ENCODE measurements at regions of chr17 and their contacts with region 1.

Region 1: GRCh38 chr17:64129764-64130558 is at the start of gene ERN1:
- DNase-seq: peak; percentile 87 to 95 (median 88)
- H3K4me3 ChIP-seq: peak within 1 kb of the TSS; percentile 92
- H3K4me3 Mint-ChIP-seq: peak within 1 kb of the TSS; percentile 91 to 98 (median 97)
- H3K27ac ChIP-seq: peak within 1 kb of the TSS; percentile 82
- H3K27ac Mint-ChIP-seq: peak within 1 kb of the TSS; percentile 92 to 98 (median 98)
- H3K4me1 ChIP-seq: peaks cover 32% of the 10 kb centered on the region
- H3K4me1 Mint-ChIP-seq: peaks cover 48 to 63% (median 59%) of the 10 kb centered on the region in 3 donors
- H3K27me3 ChIP-seq: no peaks in the 10 kb centered on the region
- H3K27me3 Mint-ChIP-seq: no peaks in the 10 kb centered on the region
- total RNA-seq, gene ERN1: 24.7 to 25.5 TPM

Region 2: DNA sequence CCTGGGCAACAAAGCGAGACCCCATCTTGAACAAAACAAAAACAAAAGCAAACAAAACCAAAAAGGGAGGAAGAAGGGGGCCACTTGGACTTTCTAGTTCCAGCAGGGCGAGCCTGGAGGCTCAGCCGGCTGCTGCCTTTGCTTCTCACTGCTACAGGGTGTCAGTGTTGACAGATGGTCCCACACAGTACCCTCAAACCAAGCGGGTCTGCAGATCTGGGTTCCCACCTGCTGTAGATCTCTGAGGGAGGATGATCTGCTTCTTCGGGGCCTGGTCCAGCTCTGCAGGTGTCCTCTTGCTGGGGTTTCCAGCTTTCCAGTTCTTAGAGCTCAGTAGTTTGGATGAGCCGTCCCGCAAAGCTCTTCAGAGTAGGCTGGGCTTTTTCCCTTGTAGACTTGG is 225.6 kb before region 1 on chr17:
- CTCF ChIA-PET with region 1: interaction called, 14 read pairs
- POLR2A ChIA-PET with region 1: no interaction called
- DNase-seq: no peak
- H3K4me3 ChIP-seq: no peak overlapping the region
- H3K4me3 Mint-ChIP-seq: no peak overlapping the region
- H3K27ac ChIP-seq: no peak overlapping the region
- H3K27ac Mint-ChIP-seq: no peak overlapping the region
- H3K4me1 ChIP-seq: no peaks in the 10 kb centered on the region
- H3K4me1 Mint-ChIP-seq: peaks cover 2 to 7% (median 5%) of the 10 kb centered on the region in 3 donors
- H3K27me3 ChIP-seq: no peaks in the 10 kb centered on the region
- H3K27me3 Mint-ChIP-seq: peaks cover 3 to 9% of the 10 kb centered on the region in 2 donors

Region 3: GRCh38 chr17:63919311-63919723 is 210.6 kb before region 1 on chr17:
- CTCF ChIA-PET with region 1: interaction called, 83 read pairs
- POLR2A ChIA-PET with region 1: interaction called, 4 read pairs
- DNase-seq: peak; percentile 57 to 81 (median 71)
- H3K4me3 ChIP-seq: no peak overlapping the region
- H3K4me3 Mint-ChIP-seq: no peak overlapping the region
- H3K27ac ChIP-seq: no peak overlapping the region
- H3K27ac Mint-ChIP-seq: peak overlapping the region in 5 of 8 donors; percentile 17 to 78 (median 63)
- H3K4me1 ChIP-seq: peaks cover 8% of the 10 kb centered on the region
- H3K4me1 Mint-ChIP-seq: peaks cover 6 to 10% (median 10%) of the 10 kb centered on the region in 3 donors
- H3K27me3 ChIP-seq: no peaks in the 10 kb centered on the region
- H3K27me3 Mint-ChIP-seq: peaks cover 0 to 3% of the 10 kb centered on the region in 2 donors

Region 4: DNA sequence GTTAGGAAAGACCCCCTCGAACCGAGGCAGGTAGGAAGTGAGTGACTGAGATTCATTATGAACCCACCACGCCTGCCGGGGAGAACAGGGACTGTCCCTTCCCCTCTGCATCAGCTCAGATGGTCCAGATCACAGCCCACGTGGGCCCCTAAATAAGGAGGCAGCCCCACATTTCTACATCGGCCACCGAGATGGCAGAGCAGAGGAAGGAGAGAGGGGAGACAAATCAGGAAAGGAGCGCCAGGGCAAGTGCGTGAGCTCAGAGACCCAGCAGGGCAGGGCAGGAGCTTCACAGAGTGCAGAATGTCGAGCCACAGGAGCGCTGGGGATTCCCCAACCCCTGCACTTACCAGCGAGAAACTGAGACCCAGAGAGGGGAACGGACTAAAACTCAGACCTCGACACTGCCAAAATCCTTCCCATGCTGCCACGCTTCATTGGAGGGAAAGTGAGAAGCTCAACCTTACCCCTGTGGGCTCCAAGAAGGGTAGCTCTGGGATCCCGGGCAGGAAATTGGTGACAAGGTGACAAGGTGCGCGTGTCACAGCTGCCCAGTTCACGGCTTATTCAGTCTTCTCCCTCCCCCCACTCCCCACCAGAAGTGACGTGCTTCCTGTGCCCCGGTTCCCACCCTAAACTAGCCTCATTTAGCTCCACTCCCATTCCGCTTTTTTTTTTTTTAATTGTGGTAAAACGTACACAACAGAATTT is 109.8 kb before region 1 on chr17 and contains the start of gene ICAM2:
- CTCF ChIA-PET with region 1: interaction called, 334 read pairs
- POLR2A ChIA-PET with region 1: interaction called, 20 read pairs
- DNase-seq: peak; percentile 90 to 98 (median 96)
- H3K4me3 ChIP-seq: peak within 1 kb of the TSS; percentile 83
- H3K4me3 Mint-ChIP-seq: peak within 1 kb of the TSS; percentile 96 to 100 (median 98)
- H3K27ac ChIP-seq: peak within 1 kb of the TSS; percentile 90
- H3K27ac Mint-ChIP-seq: peak within 1 kb of the TSS; percentile 99 to 100 (median 100)
- H3K4me1 ChIP-seq: peaks cover 82% of the 10 kb centered on the region
- H3K4me1 Mint-ChIP-seq: peaks cover 68 to 90% (median 72%) of the 10 kb centered on the region in 3 donors
- H3K27me3 ChIP-seq: no peaks in the 10 kb centered on the region
- H3K27me3 Mint-ChIP-seq: peaks cover 0 to 5% of the 10 kb centered on the region in 2 donors
- total RNA-seq, gene ICAM2: 77.4 to 80.7 TPM

Region 5: GRCh38 chr17:64056269-64057005 is 73.5 kb before region 1 on chr17:
- CTCF ChIA-PET with region 1: interaction called, 27 read pairs
- POLR2A ChIA-PET with region 1: interaction called, 18 read pairs
- DNase-seq: no peak
- H3K4me3 ChIP-seq: no peak overlapping the region
- H3K4me3 Mint-ChIP-seq: peak overlapping the region; percentile 0 to 67 (median 45)
- H3K27ac ChIP-seq: no peak overlapping the region
- H3K27ac Mint-ChIP-seq: peak overlapping the region; percentile 82 to 96 (median 90)
- H3K4me1 ChIP-seq: peaks cover 57% of the 10 kb centered on the region
- H3K4me1 Mint-ChIP-seq: peaks cover 62 to 84% (median 83%) of the 10 kb centered on the region in 3 donors
- H3K27me3 ChIP-seq: no peaks in the 10 kb centered on the region
- H3K27me3 Mint-ChIP-seq: no peaks in the 10 kb centered on the region

Region 6: GRCh38 chr17:64081802-64082799 is 47.9 kb before region 1 on chr17:
- CTCF ChIA-PET with region 1: interaction called, 14 read pairs
- POLR2A ChIA-PET with region 1: interaction called, 24 read pairs
- DNase-seq: peak in 4 of 5 donors; percentile 31 to 65 (median 42)
- H3K4me3 ChIP-seq: peak overlapping the region; percentile 30
- H3K4me3 Mint-ChIP-seq: peak overlapping the region in 2 of 7 donors; percentile 42 to 82
- H3K27ac ChIP-seq: peak overlapping the region; percentile 40
- H3K27ac Mint-ChIP-seq: peak overlapping the region in 1 of 8 donors; percentile 27
- H3K4me1 ChIP-seq: peaks cover 67% of the 10 kb centered on the region
- H3K4me1 Mint-ChIP-seq: peaks cover 7 to 29% (median 26%) of the 10 kb centered on the region in 3 donors
- H3K27me3 ChIP-seq: no peaks in the 10 kb centered on the region
- H3K27me3 Mint-ChIP-seq: no peaks in the 10 kb centered on the region

Measured in CD8-positive, alpha-beta memory T cell (primary cell).